Calu3 (cell line): ENCODE measurements at regions of chr20 and their contacts with region 1.

Region 1: DNA sequence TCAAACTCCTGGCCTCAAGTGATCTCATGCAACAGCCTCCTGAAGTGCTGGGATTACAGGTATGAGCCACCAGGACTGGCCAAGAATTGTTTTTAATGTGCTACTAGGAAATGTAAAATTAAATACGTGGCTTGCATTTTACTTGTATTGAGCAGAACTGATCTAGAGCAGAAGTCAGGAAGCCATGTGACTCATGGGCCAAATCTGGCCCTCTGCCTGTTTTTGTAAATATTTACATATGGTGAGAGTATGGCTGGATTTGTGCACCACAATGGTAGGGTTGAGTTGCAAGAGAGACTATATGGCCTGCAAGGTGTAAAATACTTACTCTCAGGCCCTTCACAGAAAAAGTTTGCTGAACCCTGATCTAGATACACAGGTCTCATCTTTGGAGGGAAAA is 75.8 kb downstream of the LAMP5 start:
- DNase-seq: peak; percentile 31
- H3K4me3 Mint-ChIP-seq: no peak overlapping the region
- H3K27ac Mint-ChIP-seq: no peak overlapping the region
- H3K4me1 Mint-ChIP-seq: peaks cover 30% of the 10 kb centered on the region
- H3K27me3 Mint-ChIP-seq: no peaks in the 10 kb centered on the region
- CTCF ChIP-seq: no peak

Region 2: DNA sequence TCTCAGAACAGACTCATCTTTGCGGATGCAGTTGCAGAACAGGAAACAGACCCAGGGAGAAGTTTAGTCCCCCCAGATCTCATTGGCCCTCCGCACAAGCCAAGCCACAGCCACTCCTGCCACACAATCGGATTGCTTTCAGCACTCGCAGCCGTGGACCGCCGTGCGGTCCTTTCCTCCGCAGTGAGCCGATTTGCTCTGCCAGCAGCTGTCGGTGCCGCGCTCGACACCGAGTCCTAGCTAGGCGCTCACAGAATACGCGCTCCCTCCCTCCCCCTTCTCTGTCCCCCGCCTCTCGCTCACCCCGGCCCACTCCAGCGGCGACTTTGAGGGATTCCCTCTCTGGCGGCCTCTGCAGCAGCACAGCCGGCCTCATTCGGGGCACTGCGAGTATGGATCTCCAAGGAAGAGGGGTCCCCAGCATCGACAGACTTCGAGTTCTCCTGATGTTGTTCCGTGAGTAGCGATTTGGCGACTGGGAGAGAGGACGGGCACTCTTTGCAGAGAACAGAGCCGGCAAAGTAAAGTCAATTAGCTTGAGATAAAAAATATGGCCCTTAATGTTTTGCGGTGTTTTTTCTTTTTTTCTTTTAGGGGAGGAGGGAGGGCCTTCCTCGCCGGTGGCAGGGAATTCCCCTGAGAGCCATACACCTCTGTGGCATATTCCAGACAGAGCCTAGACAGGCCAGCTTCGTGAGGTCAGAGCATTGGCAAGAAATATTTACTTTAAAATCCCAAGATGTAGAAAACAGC is 75.6 kb before region 1 on chr20 and contains the start of gene LAMP5:
- CTCF ChIA-PET with region 1: no interaction called
- intact Hi-C with region 1: loop called (anchors 10 kb)
- DNase-seq: no peak
- H3K4me3 Mint-ChIP-seq: peak within 1 kb of the TSS; percentile 54
- H3K27ac Mint-ChIP-seq: no peak within 1 kb of the TSS
- H3K4me1 Mint-ChIP-seq: no peaks in the 10 kb centered on the region
- H3K27me3 Mint-ChIP-seq: peaks cover 16% of the 10 kb centered on the region
- CTCF ChIP-seq: no peak
- total RNA-seq, gene LAMP5: 0.17 TPM in 1 of 2 replicates, not detected in the other